ENCODE measurements at regions of chr9 and their contacts with region 1.

Region 1: GRCh38 chr9:104831681-104832080 is 67.8 kb downstream of the NIPSNAP3B start:
- DNase-seq: no peak
- H3K4me3 ChIP-seq: no peak overlapping the region
- H3K27ac ChIP-seq: no peak overlapping the region
- H3K4me1 ChIP-seq: no peaks in the 10 kb centered on the region
- H3K27me3 ChIP-seq: no peaks in the 10 kb centered on the region
- CTCF ChIP-seq: no peak
- EP300 ChIP-seq: no peak
- POLR2A ChIP-seq: no peak

Region 2: DNA sequence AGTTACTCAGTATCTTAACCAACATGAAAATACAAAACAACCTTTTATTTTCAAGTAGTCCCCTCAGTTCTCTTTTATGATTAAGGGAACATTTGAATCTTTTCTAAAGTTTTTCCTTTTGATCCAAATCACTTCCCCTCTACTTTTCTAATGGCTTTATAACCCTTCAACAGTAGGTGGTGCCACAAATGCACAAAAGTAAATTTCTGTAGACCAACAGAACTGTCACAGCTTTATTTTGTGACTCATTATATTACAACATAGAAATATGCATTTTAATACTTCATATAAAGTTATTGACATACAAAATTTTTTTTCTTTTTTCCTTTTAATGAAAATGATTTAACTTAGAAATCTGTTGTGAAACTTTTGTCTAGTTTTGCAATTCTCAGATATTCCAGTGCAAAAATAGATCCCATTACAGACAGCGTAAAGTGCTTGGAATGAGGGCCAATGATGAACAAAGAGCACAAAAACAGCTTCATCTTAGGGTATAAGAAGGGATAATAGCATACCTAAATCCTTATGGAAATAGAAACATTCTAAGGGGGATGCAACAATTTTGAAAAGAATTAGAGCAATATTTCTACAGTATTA is 50.8 kb before region 1 on chr9:
- in situ Hi-C with region 1: no loop called
- intact Hi-C with region 1: no loop called
- DNase-seq: no peak
- H3K4me3 ChIP-seq: no peak overlapping the region
- H3K27ac ChIP-seq: no peak overlapping the region
- H3K4me1 ChIP-seq: peaks cover 0 to 2% (median 0%) of the 10 kb centered on the region in 4 donors
- H3K27me3 ChIP-seq: no peaks in the 10 kb centered on the region
- CTCF ChIP-seq: peak in 1 of 5 experiments; percentile 6
- EP300 ChIP-seq: no peak
- POLR2A ChIP-seq: no peak

Region 3: GRCh38 chr9:104896131-104896530 is 64.5 kb after region 1 on chr9:
- in situ Hi-C with region 1: no loop called
- intact Hi-C with region 1: loop called (anchors 2 kb)
- DNase-seq: no peak
- H3K4me3 ChIP-seq: no peak overlapping the region
- H3K27ac ChIP-seq: no peak overlapping the region
- H3K4me1 ChIP-seq: peaks cover 5 to 39% (median 6%) of the 10 kb centered on the region in 4 donors
- H3K27me3 ChIP-seq: no peaks in the 10 kb centered on the region
- CTCF ChIP-seq: no peak
- EP300 ChIP-seq: no peak
- POLR2A ChIP-seq: no peak